ENCODE measurements at regions of chr16 and their contacts with region 1.

Region 1: GRCh38 chr16:70345840-70346239 is 863 bp upstream of the DDX19A start:
- DNase-seq: no peak
- H3K4me3 ChIP-seq: peak overlapping the region; percentile 78
- H3K27ac ChIP-seq: peak overlapping the region; percentile 53
- H3K4me1 ChIP-seq: peaks cover 24% of the 10 kb centered on the region
- CTCF ChIP-seq: no peak

Region 2: GRCh38 chr16:70298988-70299938 is 46.6 kb before region 1 on chr16 and contains the start of gene DDX19B:
- CTCF ChIA-PET with region 1: no interaction called
- POLR2A ChIA-PET with region 1: interaction called, 11 read pairs
- intact Hi-C with region 1: no loop called
- DNase-seq: peak; percentile 65
- H3K4me3 ChIP-seq: peak within 1 kb of the TSS; percentile 78
- H3K27ac ChIP-seq: peak within 1 kb of the TSS; percentile 14
- H3K4me1 ChIP-seq: peaks cover 10% of the 10 kb centered on the region
- CTCF ChIP-seq: no peak
- total RNA-seq, gene DDX19B: 18.7 and 22.4 TPM in 2 replicates

Region 3: DNA sequence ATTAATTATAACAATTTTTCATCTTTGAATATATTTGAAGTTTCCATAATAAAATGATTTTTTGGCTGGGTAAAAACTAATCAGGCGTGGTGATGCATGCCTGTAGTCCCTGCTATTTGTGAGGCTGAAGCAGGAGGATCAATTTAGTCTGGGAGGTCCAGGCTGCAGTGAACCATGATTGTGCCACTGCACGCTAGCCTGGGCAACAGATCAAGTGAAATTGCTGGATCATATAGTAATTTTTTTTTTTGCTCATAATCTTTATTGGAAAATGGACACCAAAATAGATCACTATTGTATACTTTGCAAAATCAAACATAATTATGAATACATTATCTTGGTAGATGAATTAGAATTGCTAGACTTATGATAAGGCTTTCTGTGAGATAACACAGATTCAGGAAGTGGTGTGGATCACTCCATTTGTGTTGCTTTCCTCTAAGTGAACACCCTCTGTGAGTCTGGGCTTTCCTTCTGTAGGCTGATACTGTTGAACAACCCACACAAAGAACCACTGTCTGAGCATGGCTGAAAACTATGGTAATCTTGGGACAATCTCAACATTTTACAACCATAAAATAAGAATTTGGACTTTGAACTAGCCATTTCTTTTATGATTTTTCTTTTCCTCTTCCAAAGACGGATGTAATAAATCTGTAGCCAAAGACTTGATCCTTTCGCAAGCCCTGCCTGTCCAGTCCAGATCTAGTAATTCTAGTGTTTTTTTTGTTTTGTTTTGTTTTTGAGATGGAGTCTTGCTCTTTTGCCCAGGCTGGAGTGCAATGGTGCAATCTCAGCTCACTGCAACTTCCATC is 98.6 kb after region 1 on chr16:
- CTCF ChIA-PET with region 1: no interaction called
- POLR2A ChIA-PET with region 1: no interaction called
- intact Hi-C with region 1: no loop called
- DNase-seq: no peak
- H3K4me3 ChIP-seq: no peak overlapping the region
- H3K27ac ChIP-seq: no peak overlapping the region
- H3K4me1 ChIP-seq: peaks cover 17% of the 10 kb centered on the region
- CTCF ChIP-seq: no peak